ENCODE measurements at regions of chr3 and their contacts with region 1.

Region 1: GRCh38 chr3:184636741-184637316 is 75.0 kb downstream of the MAGEF1 start:
- DNase-seq: peak; percentile 39
- H3K4me3 Mint-ChIP-seq: no peak overlapping the region
- H3K27ac Mint-ChIP-seq: no peak overlapping the region
- H3K4me1 Mint-ChIP-seq: peaks cover 6% of the 10 kb centered on the region
- H3K27me3 Mint-ChIP-seq: peaks cover 12% of the 10 kb centered on the region

Region 2: GRCh38 chr3:184543843-184544512 is 92.9 kb before region 1 on chr3:
- intact Hi-C with region 1: no loop called
- DNase-seq: peak; percentile 72
- H3K4me3 Mint-ChIP-seq: no peak overlapping the region
- H3K27ac Mint-ChIP-seq: no peak overlapping the region
- H3K4me1 Mint-ChIP-seq: peaks cover 2% of the 10 kb centered on the region
- H3K27me3 Mint-ChIP-seq: peaks cover 14% of the 10 kb centered on the region

Region 3: GRCh38 chr3:184656829-184657681 is 20.2 kb after region 1 on chr3:
- intact Hi-C with region 1: loop called (anchors 1 kb)
- DNase-seq: no peak
- H3K4me3 Mint-ChIP-seq: no peak overlapping the region
- H3K27ac Mint-ChIP-seq: peak overlapping the region; percentile 44
- H3K4me1 Mint-ChIP-seq: peaks cover 17% of the 10 kb centered on the region
- H3K27me3 Mint-ChIP-seq: peaks cover 3% of the 10 kb centered on the region

Measured in activated T-helper 2 cell treated with anti-CD3 and anti-CD28 coated beads, Interferon-gamma antibody, Interleukin-2, Interleukin-4, amounts not matched to agents 10 μg/mL and 5 μg/mL and 100 μg/mL, durations not matched to agents 14 hours and 24 hours and 36 hours (primary cell).